ENCODE measurements at regions of chr14 and their contacts with region 1.

Region 1: GRCh38 chr14:76876076-76876475 is 49.9 kb downstream of the LRRC74A start:
- DNase-seq: peak in 26 of 35 experiments; percentile 7 to 68 (median 30)
- ATAC-seq: peak; percentile 58 to 83 (median 69)
- H3K4me3 ChIP-seq: no peak overlapping the region
- H3K4me3 Mint-ChIP-seq: no peak overlapping the region
- H3K27ac ChIP-seq: no peak overlapping the region
- H3K27ac Mint-ChIP-seq: no peak overlapping the region
- H3K4me1 ChIP-seq: no peaks in the 10 kb centered on the region
- H3K4me1 Mint-ChIP-seq: peaks cover 0 to 2% (median 0%) of the 10 kb centered on the region in 3 donors
- H3K27me3 ChIP-seq: peaks cover 0 to 22% of the 10 kb centered on the region in 2 experiments
- H3K27me3 Mint-ChIP-seq: peaks cover 0 to 2% of the 10 kb centered on the region in 2 donors

Region 2: GRCh38 chr14:76918751-76919543 is 42.9 kb after region 1 on chr14:
- CTCF ChIA-PET with region 1: interaction called, 5 to 12 read pairs
- POLR2A ChIA-PET with region 1: no interaction called
- DNase-seq: no peak
- ATAC-seq: no peak
- H3K4me3 ChIP-seq: no peak overlapping the region
- H3K4me3 Mint-ChIP-seq: peak overlapping the region in 1 of 3 donors; percentile 52
- H3K27ac ChIP-seq: no peak overlapping the region
- H3K27ac Mint-ChIP-seq: peak overlapping the region in 1 of 2 donors; percentile 11
- H3K4me1 ChIP-seq: peaks cover 15 to 57% of the 10 kb centered on the region in 2 experiments
- H3K4me1 Mint-ChIP-seq: peaks cover 43 to 56% (median 49%) of the 10 kb centered on the region in 3 donors
- H3K27me3 ChIP-seq: no peaks in the 10 kb centered on the region
- H3K27me3 Mint-ChIP-seq: no peaks in the 10 kb centered on the region

Region 3: DNA sequence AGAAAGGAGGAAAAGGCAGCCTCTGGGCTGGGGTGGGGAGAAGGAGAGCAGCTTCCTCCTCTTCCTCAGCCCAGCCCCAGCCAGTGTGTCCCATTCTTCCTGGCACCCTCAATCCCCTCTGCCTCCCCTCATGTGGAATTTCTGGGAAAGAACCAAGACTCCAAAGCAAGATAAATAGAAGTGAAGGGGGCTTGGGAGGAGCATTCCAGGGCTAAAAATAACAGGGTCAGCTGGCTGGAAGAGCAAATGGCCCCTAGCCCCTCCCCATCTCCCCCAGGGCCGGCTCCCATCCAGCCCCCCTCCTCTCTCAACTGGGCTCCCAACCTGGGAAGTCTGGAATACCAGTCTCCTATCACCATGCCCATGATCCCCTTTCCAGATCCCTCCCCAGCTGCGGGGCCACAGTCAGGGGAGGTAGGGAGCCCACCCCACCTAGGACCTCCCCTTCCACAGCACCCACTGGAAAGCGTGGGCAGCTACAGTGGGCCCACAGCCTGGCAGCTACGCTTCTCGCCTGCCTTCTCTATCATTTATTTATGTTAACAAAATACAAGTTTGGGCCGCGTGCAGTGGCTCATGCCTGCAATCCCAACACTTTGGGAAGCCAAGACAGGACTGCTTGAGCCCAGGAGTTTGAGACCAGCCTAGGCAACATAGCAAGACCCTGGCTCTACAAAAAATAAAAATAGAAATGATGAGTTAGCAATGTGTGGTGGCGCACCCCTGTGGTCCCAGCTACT is 64.1 kb after region 1 on chr14:
- CTCF ChIA-PET with region 1: interaction called, 3 to 11 read pairs
- POLR2A ChIA-PET with region 1: no interaction called
- DNase-seq: no peak
- ATAC-seq: no peak
- H3K4me3 ChIP-seq: no peak overlapping the region
- H3K4me3 Mint-ChIP-seq: no peak overlapping the region
- H3K27ac ChIP-seq: no peak overlapping the region
- H3K27ac Mint-ChIP-seq: no peak overlapping the region
- H3K4me1 ChIP-seq: no peaks in the 10 kb centered on the region
- H3K4me1 Mint-ChIP-seq: peaks cover 11 to 12% (median 12%) of the 10 kb centered on the region in 3 donors
- H3K27me3 ChIP-seq: peaks cover 0 to 2% of the 10 kb centered on the region in 2 experiments
- H3K27me3 Mint-ChIP-seq: no peaks in the 10 kb centered on the region

Region 4: GRCh38 chr14:77053046-77053841 is 177.2 kb after region 1 on chr14:
- CTCF ChIA-PET with region 1: interaction called, 6 to 26 read pairs
- POLR2A ChIA-PET with region 1: interaction called in 1 of 2 experiments, 3 read pairs
- DNase-seq: peak; percentile 45 to 90 (median 75)
- ATAC-seq: peak; percentile 78 to 97 (median 88)
- H3K4me3 ChIP-seq: no peak overlapping the region
- H3K4me3 Mint-ChIP-seq: no peak overlapping the region
- H3K27ac ChIP-seq: no peak overlapping the region
- H3K27ac Mint-ChIP-seq: no peak overlapping the region
- H3K4me1 ChIP-seq: peaks cover 0 to 21% of the 10 kb centered on the region in 2 experiments
- H3K4me1 Mint-ChIP-seq: peaks cover 11 to 31% (median 15%) of the 10 kb centered on the region in 3 donors
- H3K27me3 ChIP-seq: no peaks in the 10 kb centered on the region
- H3K27me3 Mint-ChIP-seq: no peaks in the 10 kb centered on the region

Region 5: DNA sequence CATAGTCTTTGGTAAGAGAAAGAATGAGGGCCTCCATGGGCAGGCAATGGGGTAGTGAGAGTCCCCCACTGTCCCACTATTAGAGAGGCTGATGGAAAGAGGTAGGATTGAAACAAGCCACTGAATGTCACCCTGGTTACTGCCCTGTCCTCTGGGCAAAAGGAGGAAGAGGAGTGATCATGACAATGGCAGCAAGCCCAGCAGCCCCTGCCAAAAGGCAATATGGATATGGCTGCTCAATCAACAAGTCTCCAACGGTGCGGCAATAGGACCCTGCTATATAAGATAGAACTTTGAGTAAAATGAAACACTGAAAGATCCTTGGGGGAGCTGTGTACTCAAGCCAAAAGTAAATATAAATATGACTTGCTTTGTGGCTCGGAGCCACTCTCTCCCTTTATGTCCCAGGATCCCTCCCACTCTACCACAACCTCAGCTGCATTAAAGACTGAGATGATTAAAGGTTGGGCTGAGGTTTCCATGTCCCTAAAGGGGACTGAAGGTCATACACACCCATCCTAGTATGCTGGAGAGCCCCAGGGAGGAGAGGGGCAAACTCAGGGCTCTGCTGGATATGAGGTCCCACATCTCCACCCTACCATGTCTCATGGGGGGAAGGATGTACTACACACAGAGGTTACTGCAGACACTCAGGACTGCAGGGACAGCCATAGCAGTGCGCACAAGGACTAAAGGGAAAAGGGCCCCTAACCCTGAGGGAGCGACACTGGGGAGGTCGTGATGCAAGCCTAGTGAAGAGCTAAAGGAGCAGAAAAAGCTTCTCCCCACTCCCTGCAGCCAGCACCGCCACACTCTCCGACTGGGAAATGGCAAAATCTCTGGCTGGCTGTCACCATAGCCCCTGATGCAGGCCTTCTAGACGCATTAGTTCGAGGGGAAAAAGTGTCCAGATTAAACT is 438.7 kb after region 1 on chr14:
- CTCF ChIA-PET with region 1: interaction called, 3 to 12 read pairs
- POLR2A ChIA-PET with region 1: interaction called in 1 of 2 experiments, 11 read pairs
- DNase-seq: no peak
- ATAC-seq: no peak
- H3K4me3 ChIP-seq: no peak overlapping the region
- H3K4me3 Mint-ChIP-seq: no peak overlapping the region
- H3K27ac ChIP-seq: no peak overlapping the region
- H3K27ac Mint-ChIP-seq: no peak overlapping the region
- H3K4me1 ChIP-seq: no peaks in the 10 kb centered on the region
- H3K4me1 Mint-ChIP-seq: peaks cover 1 to 5% (median 4%) of the 10 kb centered on the region in 3 donors
- H3K27me3 ChIP-seq: no peaks in the 10 kb centered on the region
- H3K27me3 Mint-ChIP-seq: no peaks in the 10 kb centered on the region

Measured in T-cell (primary cell).